Sciatic nerve (tissue), 2 donors: ENCODE measurements at regions of chr1 and their contacts with region 1.

Region 1: GRCh38 chr1:94329986-94330385 is 88.2 kb upstream of the ABCD3 start:
- DNase-seq: no peak
- ATAC-seq: peak; percentile 67

Region 2: DNA sequence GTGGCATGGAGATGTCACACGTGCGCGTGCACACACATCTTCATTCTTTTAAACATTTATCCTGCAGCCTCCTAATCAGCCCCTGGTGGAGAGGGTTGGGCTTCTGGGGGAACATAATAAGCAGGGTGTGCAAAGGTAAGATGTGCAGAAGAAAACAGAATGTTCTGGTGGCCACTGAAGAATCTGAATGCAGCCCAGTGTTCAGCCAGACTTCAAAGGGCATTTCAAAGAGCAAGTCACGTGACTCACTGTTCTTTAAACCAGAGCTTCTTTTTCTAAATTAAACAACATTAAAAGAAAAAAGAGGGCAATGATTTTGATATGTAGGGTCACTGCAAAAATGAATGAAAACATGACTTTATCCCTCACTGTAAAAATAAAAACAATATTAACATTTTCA is 298.8 kb before region 1 on chr1:
- intact Hi-C with region 1: loop called (anchors 2 kb)
- DNase-seq: no peak
- ATAC-seq: peak; percentile 79

Region 3: DNA sequence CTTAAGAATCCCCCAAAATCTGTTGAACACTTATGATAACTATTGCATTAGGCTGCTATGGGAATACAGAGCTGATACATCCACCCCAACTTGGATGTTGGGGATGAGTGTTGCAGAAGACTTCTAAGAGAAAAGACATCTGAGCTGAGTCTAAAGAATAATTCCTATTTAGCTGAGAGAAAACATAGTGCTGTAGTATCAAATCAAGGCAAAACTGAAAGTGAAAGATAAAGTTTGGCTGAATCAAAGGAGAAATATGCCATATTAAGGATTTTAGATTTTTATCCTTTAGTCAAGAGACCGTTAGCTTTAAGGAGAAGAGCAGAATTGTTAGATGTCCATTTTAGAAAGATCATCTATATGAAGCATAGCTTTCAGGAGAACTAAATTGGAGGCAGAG is 1664.7 kb after region 1 on chr1:
- intact Hi-C with region 1: no loop called
- DNase-seq: no peak
- ATAC-seq: no peak